Activated naive CD8-positive, alpha-beta T cell treated with anti-CD3 and anti-CD28 coated beads, Interleukin-2, amount 10 ng/mL, durations not matched to agents 7 days and 5 days (primary cell): ENCODE measurements at regions of chr5 and their contacts with region 1.

Region 1: GRCh38 chr5:43484106-43484849 is 613 bp upstream of the TMEM267 start:
- DNase-seq: peak; percentile 86
- ATAC-seq: peak; percentile 62
- H3K4me3 Mint-ChIP-seq: peak overlapping the region; percentile 98
- H3K27ac Mint-ChIP-seq: peak overlapping the region; percentile 100
- H3K4me1 Mint-ChIP-seq: peaks cover 34% of the 10 kb centered on the region
- H3K27me3 Mint-ChIP-seq: no peaks in the 10 kb centered on the region

Region 2: GRCh38 chr5:43019614-43020293 is 464.5 kb before region 1 on chr5:
- POLR2A ChIA-PET with region 1: interaction called, 32 read pairs
- DNase-seq: peak; percentile 75
- ATAC-seq: peak; percentile 72
- H3K4me3 Mint-ChIP-seq: peak overlapping the region; percentile 97
- H3K27ac Mint-ChIP-seq: peak overlapping the region; percentile 100
- H3K4me1 Mint-ChIP-seq: peaks cover 27% of the 10 kb centered on the region
- H3K27me3 Mint-ChIP-seq: no peaks in the 10 kb centered on the region

Region 3: GRCh38 chr5:43120720-43121564 is 363.3 kb before region 1 on chr5 and contains the start of gene ZNF131:
- POLR2A ChIA-PET with region 1: interaction called, 57 read pairs
- DNase-seq: peak; percentile 99
- ATAC-seq: peak; percentile 88
- H3K4me3 Mint-ChIP-seq: peak within 1 kb of the TSS; percentile 93
- H3K27ac Mint-ChIP-seq: peak within 1 kb of the TSS; percentile 98
- H3K4me1 Mint-ChIP-seq: peaks cover 29% of the 10 kb centered on the region
- H3K27me3 Mint-ChIP-seq: no peaks in the 10 kb centered on the region
- total RNA-seq, gene ZNF131: 55.6 to 58.0 TPM

Region 4: GRCh38 chr5:43396762-43397304 is 87.4 kb before region 1 on chr5:
- POLR2A ChIA-PET with region 1: interaction called, 42 read pairs
- DNase-seq: peak; percentile 81
- ATAC-seq: peak; percentile 99
- H3K4me3 Mint-ChIP-seq: peak overlapping the region; percentile 99
- H3K27ac Mint-ChIP-seq: peak overlapping the region; percentile 99
- H3K4me1 Mint-ChIP-seq: peaks cover 20% of the 10 kb centered on the region
- H3K27me3 Mint-ChIP-seq: no peaks in the 10 kb centered on the region

Region 5: GRCh38 chr5:43556857-43557542 is 72.7 kb after region 1 on chr5 and contains the start of gene PAIP1:
- POLR2A ChIA-PET with region 1: interaction called, 18 read pairs
- DNase-seq: peak; percentile 89
- ATAC-seq: peak; percentile 86
- H3K4me3 Mint-ChIP-seq: peak within 1 kb of the TSS; percentile 86
- H3K27ac Mint-ChIP-seq: peak within 1 kb of the TSS; percentile 95
- H3K4me1 Mint-ChIP-seq: peaks cover 14% of the 10 kb centered on the region
- H3K27me3 Mint-ChIP-seq: peaks cover 12% of the 10 kb centered on the region
- total RNA-seq, gene PAIP1: 34.9 to 37.0 TPM